ENCODE measurements at regions of chr2 and their contacts with region 1.

Region 1: DNA sequence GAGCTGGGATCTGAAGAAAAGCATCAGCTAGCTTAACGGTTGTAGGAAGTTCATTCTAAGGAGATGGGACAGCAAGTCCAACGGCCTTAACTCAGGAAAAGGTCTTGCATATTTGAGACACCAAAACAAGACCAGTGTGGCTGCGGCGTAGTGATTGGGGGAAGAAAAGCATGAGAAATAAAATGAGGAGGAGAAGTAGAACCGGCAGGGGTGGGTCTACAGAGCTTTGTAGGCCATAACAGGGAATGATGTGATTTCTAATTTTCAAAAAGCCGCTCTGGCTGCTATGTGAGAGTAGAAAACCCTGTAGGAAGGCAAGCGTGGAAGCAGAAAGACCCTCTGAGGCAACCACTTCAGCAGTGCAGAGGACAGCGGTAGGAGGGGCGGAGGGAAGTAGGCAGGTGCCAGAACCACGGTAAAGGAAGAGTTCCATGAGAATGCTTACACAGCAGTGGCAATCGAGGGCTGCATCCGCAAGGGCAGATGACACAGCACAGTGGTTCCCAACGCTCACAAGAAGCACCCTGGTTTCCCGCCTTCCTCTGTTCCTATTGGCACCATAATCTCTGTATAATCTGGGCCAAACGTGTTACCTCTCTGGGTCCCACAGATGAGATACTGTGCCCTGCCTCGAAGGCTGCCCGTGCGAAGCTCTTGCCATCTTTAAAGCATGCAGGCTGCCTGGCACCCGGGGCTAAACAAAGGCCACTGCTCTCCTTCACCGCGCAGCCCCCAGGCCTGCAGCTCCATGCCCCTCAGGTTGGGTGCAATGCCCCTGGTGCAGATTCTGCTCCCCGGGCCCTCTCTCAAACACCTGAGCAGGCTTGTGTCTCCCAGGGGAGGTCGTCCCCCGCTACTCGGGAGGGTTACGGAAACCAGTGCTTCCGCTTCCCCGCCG is 791 bp downstream of the ANKRD39 start:
- DNase-seq: peak; percentile 63
- H3K4me3 Mint-ChIP-seq: peak overlapping the region; percentile 90
- H3K27ac Mint-ChIP-seq: peak overlapping the region; percentile 75
- H3K4me1 Mint-ChIP-seq: peaks cover 45% of the 10 kb centered on the region
- H3K27me3 Mint-ChIP-seq: no peaks in the 10 kb centered on the region

Region 2: DNA sequence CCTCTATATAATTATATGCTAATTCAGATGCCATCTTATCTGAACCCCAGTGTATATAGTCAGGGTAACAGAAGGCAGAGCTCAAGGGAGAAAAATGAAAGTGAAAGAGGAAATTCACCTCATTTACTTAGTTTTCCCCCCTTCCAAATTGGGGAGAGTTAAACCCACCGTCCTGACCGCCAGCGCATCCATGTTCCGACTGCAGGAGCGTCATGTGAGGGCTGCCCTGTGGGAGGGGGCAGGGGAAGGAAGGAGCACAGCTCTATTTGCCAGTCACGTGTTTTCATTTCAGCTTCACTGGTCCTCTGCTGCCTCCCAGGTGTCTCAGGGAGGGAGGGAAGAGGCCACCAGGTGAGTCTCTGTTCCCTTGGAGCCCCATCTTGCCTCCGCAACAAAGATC is 83.1 kb before region 1 on chr2:
- CTCF ChIA-PET with region 1: interaction called, 11 read pairs
- POLR2A ChIA-PET with region 1: interaction called, 4 read pairs
- DNase-seq: peak; percentile 58
- H3K4me3 Mint-ChIP-seq: peak overlapping the region; percentile 77
- H3K27ac Mint-ChIP-seq: peak overlapping the region; percentile 65
- H3K4me1 Mint-ChIP-seq: peaks cover 28% of the 10 kb centered on the region
- H3K27me3 Mint-ChIP-seq: no peaks in the 10 kb centered on the region

Region 3: DNA sequence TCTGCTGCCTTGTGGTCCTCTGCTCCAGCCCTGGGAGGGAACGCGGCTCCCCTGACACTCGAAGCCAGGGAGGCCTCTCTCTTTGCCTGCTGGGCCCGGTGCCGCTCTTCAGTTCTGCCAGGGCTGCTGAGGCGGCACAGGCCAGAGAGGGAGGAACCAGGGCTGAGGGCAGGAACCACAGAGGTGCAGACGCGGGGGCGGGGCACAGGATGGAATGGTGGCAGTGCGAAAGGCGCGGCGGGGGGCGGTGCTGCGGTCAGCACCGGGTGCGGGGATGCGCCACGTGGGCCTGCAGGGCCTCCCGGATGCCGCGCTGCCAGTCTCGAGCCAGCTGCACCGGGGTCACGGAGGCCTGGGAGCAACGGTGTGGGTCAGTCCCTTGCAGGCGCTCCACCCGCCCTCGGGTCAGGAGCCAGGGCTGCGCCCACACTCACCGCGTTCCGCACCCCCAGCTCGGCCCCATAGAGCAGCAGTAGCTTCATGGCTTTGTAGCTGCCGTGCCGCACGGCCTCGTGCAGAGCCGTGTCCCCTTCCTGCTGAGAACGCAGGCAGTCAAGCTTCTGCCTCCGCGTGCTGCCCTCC is 17.6 kb before region 1 on chr2:
- CTCF ChIA-PET with region 1: interaction called, 10 read pairs
- POLR2A ChIA-PET with region 1: interaction called, 33 read pairs
- DNase-seq: peak; percentile 91
- H3K4me3 Mint-ChIP-seq: peak overlapping the region; percentile 34
- H3K27ac Mint-ChIP-seq: peak overlapping the region; percentile 79
- H3K4me1 Mint-ChIP-seq: peaks cover 31% of the 10 kb centered on the region
- H3K27me3 Mint-ChIP-seq: no peaks in the 10 kb centered on the region

Region 4: DNA sequence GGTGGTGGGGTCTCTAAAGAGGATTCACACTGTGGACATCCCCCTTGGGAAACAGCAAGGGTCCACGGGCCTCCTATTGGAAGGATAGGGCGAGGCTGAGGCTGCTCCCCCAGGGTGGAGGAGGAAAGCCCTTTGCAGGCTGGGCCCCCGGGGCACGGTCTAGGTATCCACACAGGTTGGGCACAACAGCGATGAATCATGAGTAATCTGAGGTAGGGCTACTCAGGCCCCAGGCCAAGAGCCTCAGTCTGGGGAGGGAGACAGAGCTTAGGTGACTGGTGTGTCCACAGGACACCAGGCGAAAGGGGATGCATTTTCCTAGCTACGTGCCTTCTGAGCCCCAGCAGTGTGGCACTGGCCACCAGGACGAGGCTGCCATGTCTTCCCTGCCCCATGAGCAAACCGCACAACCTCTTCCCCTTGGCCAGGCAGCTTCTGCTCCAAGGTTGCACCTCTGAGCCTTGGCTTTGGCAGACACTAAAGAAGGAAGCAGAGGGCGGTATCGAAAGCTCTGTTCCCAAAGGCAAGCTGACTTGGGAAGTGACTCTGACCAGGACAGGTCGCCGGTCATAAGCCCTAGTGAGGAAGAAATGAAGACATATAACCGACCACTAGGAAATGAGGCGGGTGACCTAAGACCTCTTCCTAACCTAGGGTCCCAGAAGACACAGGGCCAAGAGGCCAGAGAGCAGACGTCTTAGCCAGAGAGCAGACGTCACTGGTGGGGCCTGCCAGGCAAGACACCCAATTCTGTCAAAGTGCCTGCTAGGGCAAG is 27.5 kb after region 1 on chr2:
- CTCF ChIA-PET with region 1: interaction called, 10 read pairs
- POLR2A ChIA-PET with region 1: interaction called, 5 read pairs
- DNase-seq: no peak
- H3K4me3 Mint-ChIP-seq: no peak overlapping the region
- H3K27ac Mint-ChIP-seq: no peak overlapping the region
- H3K4me1 Mint-ChIP-seq: no peaks in the 10 kb centered on the region
- H3K27me3 Mint-ChIP-seq: peaks cover 1% of the 10 kb centered on the region

Region 5: GRCh38 chr2:96940001-96940615 is 83.1 kb after region 1 on chr2:
- CTCF ChIA-PET with region 1: interaction called, 20 read pairs
- POLR2A ChIA-PET with region 1: interaction called, 6 read pairs
- DNase-seq: no peak
- H3K4me3 Mint-ChIP-seq: no peak overlapping the region
- H3K27ac Mint-ChIP-seq: no peak overlapping the region
- H3K4me1 Mint-ChIP-seq: peaks cover 19% of the 10 kb centered on the region
- H3K27me3 Mint-ChIP-seq: peaks cover 30% of the 10 kb centered on the region

Region 6: DNA sequence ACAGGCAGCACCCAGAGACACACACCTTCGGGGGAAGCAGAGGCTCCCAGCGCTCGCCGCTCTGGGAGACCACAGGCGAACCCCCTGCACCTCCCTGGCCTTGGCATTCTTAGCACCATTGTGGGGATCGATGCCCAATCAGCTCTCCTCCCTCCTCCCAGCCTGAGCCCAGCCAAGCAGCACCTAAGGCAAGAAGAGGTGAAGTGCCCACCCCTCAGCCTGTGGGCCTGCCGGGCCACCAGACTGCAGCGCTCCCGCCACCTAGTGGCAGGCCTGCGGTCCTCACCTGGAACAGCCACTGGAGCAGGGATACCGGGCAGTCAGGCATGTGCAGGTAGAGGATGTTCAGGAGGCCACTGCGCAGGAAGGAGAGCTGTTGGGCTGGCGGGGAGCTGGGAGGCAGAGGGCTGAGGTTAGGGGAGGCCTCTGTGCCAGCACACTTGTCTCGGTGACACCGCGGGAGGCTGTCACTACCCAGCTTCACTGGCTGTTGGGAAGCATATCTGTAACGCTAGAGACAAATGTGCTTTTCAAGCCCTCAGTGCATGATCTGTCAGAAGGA is 94.1 kb after region 1 on chr2:
- CTCF ChIA-PET with region 1: interaction called, 176 read pairs
- POLR2A ChIA-PET with region 1: interaction called, 62 read pairs
- DNase-seq: peak; percentile 79
- H3K4me3 Mint-ChIP-seq: no peak overlapping the region
- H3K27ac Mint-ChIP-seq: no peak overlapping the region
- H3K4me1 Mint-ChIP-seq: peaks cover 28% of the 10 kb centered on the region
- H3K27me3 Mint-ChIP-seq: peaks cover 8% of the 10 kb centered on the region

Measured in activated CD4-positive, alpha-beta memory T cell treated with anti-CD3 and anti-CD28 coated beads, Interleukin-2, amount 10 ng/mL, durations not matched to agents 7 days and 5 days (primary cell).